Naive thymus-derived CD4-positive, alpha-beta T cell (primary cell): ENCODE measurements at regions of chr3 and their contacts with region 1.

Region 1: GRCh38 chr3:50292159-50293078 is at the start of gene IFRD2:
- DNase-seq: peak; percentile 81 to 97 (median 94)
- ATAC-seq: peak; percentile 99
- H3K4me3 ChIP-seq: peak within 1 kb of the TSS; percentile 62
- H3K4me3 Mint-ChIP-seq: peak within 1 kb of the TSS; percentile 81 to 99 (median 88)
- H3K27ac ChIP-seq: peak within 1 kb of the TSS; percentile 79
- H3K27ac Mint-ChIP-seq: peak within 1 kb of the TSS; percentile 85 to 97 (median 93)
- H3K4me1 ChIP-seq: peaks cover 13 to 16% of the 10 kb centered on the region in 2 donors
- H3K4me1 Mint-ChIP-seq: peaks cover 16 to 22% (median 19%) of the 10 kb centered on the region in 7 donors
- H3K27me3 ChIP-seq: no peaks in the 10 kb centered on the region
- H3K27me3 Mint-ChIP-seq: no peaks in the 10 kb centered on the region
- total RNA-seq, gene IFRD2: 53.7 to 85.1 (median 64.7) TPM

Region 2: DNA sequence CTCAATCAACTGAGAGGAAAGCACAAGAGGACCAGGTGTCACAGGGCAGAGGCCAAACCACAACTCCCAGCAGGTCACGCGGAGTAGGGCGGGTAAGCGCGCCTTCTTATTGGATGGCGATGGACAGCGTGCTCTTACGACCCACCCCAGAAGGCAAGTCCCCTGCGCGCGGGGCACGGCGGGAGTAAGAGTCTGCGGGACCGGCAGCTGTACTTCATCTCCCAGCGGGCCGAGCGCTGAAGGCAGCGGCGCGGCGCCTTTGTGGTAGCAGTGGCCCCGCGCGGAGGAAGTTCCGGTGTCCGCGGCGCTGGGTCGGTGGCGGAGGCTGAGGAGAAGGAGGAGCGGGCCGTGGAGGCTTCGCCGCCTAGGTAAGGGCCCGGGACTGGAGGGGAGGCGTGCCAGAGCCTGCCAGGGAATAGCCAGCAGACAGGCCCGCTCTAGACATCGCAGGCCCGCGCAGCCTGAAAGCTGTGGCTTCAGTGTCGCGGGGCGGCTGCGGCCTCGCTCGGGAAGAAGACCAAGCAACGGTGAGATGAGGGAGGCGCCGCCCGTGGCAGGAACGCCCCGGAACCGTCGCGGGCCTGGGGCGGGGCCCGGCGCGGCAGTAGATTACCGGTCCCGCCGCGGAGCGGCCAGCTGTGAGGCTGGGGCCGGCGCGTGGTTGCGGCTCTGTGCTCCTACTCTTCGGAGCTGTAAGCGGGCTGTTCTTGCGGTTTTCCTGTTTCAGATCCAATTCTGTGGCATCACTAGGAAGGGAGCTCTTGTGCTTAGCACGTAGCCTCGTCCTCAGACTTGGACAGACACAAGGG is 352.4 kb before region 1 on chr3 and contains the start of gene RBM6:
- CTCF ChIA-PET with region 1: no interaction called
- POLR2A ChIA-PET with region 1: no interaction called
- intact Hi-C with region 1: loop called in 1 of 2 experiments (anchors 1 kb)
- DNase-seq: peak; percentile 84 to 95 (median 93)
- ATAC-seq: peak; percentile 98
- H3K4me3 ChIP-seq: peak within 1 kb of the TSS; percentile 88
- H3K4me3 Mint-ChIP-seq: peak within 1 kb of the TSS; percentile 93 to 100 (median 98)
- H3K27ac ChIP-seq: peak within 1 kb of the TSS; percentile 97
- H3K27ac Mint-ChIP-seq: peak within 1 kb of the TSS; percentile 91 to 99 (median 97)
- H3K4me1 ChIP-seq: peaks cover 8 to 15% of the 10 kb centered on the region in 2 donors
- H3K4me1 Mint-ChIP-seq: peaks cover 7 to 41% (median 32%) of the 10 kb centered on the region in 7 donors
- H3K27me3 ChIP-seq: no peaks in the 10 kb centered on the region
- H3K27me3 Mint-ChIP-seq: peaks cover 0 to 1% (median 0%) of the 10 kb centered on the region in 5 donors
- total RNA-seq, gene RBM6: 103 to 208 (median 153) TPM

Region 3: DNA sequence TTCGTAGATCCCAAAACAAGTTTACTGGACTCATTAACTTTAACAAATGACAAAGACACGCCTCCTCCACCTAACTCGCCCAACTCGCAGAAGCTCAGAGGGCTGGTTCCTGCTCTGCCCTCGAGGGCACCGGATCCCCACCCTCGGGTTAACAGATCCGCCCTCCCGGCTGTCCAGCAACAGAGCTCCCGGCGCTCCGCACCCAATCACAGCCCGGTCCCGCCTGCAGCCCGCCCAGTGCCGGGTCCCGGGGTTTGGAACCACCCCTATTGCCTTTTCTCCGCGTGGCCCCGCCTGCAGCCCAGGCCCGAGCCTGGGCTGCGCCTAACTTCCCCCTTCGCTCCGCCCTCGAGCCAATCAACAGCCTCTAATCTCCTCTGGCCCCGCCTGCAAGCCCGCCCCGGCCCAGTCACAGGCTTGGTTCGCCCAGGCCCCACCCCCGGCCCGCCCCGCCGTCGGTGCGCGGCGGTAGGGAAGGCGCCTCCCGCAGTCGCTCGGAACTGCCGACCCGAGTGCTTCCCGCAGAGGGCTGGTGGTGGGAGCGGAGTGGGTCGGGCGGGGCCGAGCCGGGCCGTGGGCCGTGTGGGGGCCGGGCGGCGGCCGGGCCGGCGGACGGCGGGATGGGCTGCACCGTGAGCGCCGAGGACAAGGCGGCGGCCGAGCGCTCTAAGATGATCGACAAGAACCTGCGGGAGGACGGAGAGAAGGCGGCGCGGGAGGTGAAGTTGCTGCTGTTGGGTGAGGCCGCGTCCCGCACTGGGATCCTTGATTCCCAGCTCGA is 56.5 kb before region 1 on chr3 and contains the start of gene GNAI2:
- CTCF ChIA-PET with region 1: interaction called, 3 read pairs
- POLR2A ChIA-PET with region 1: interaction called, 17 read pairs
- intact Hi-C with region 1: loop called (anchors 1 kb)
- DNase-seq: peak; percentile 95 to 99 (median 99)
- ATAC-seq: peak; percentile 93
- H3K4me3 ChIP-seq: peak within 1 kb of the TSS; percentile 90
- H3K4me3 Mint-ChIP-seq: peak within 1 kb of the TSS; percentile 92 to 99 (median 98)
- H3K27ac ChIP-seq: peak within 1 kb of the TSS; percentile 84
- H3K27ac Mint-ChIP-seq: peak within 1 kb of the TSS; percentile 87 to 97 (median 95)
- H3K4me1 ChIP-seq: peaks cover 30 to 35% of the 10 kb centered on the region in 2 donors
- H3K4me1 Mint-ChIP-seq: peaks cover 12 to 41% (median 37%) of the 10 kb centered on the region in 7 donors
- H3K27me3 ChIP-seq: no peaks in the 10 kb centered on the region
- H3K27me3 Mint-ChIP-seq: no peaks in the 10 kb centered on the region
- total RNA-seq, gene GNAI2: 225 to 442 (median 282) TPM

Region 4: DNA sequence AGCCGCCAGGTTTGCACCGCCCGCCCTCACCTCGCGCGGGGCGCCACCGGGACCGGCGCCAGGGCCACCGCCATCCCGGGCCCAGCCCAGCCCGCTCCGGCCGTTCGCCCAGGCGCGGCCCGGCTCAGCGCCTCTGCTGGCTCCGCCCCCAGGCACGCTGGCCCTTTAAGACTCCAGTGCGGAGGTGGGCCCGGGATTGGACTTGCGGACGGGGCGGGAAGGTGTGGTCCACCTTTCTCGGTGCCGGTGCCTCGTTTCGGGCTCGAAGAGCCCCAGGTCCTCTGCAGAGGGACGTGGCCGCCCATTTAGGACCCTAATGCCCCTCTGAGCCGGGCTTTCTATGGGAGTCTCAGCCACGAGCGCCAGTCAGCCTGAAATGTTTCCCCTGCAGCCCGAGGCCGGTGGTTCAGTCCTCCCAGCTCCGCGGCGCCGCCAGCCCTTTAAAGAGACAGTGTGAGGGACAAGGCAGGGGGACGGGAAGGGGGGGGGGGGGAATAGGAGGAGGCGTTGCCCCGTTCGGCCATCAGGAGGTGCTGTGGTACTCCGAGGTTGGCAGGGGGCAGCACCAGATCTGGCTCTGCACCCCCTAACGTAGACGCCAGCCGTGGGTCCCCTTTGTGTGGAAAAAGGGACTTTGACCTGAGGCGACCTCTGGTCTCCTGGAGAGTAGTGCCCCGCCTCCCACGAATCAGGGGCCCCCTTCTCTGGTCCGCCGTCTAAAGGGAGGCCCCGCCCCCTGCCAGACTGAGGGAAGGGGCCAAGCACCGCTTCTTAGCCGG is 29.1 kb after region 1 on chr3:
- CTCF ChIA-PET with region 1: interaction called, 3 read pairs
- POLR2A ChIA-PET with region 1: interaction called, 31 read pairs
- intact Hi-C with region 1: loop called in 1 of 2 experiments (anchors 1 kb)
- DNase-seq: peak; percentile 67 to 90 (median 83)
- ATAC-seq: peak; percentile 83
- H3K4me3 ChIP-seq: peak overlapping the region; percentile 97
- H3K4me3 Mint-ChIP-seq: peak overlapping the region; percentile 74 to 90 (median 82)
- H3K27ac ChIP-seq: peak overlapping the region; percentile 95
- H3K27ac Mint-ChIP-seq: peak overlapping the region; percentile 40 to 96 (median 93)
- H3K4me1 ChIP-seq: peaks cover 12 to 21% of the 10 kb centered on the region in 2 donors
- H3K4me1 Mint-ChIP-seq: peaks cover 21 to 45% (median 36%) of the 10 kb centered on the region in 7 donors
- H3K27me3 ChIP-seq: no peaks in the 10 kb centered on the region
- H3K27me3 Mint-ChIP-seq: no peaks in the 10 kb centered on the region

Region 5: DNA sequence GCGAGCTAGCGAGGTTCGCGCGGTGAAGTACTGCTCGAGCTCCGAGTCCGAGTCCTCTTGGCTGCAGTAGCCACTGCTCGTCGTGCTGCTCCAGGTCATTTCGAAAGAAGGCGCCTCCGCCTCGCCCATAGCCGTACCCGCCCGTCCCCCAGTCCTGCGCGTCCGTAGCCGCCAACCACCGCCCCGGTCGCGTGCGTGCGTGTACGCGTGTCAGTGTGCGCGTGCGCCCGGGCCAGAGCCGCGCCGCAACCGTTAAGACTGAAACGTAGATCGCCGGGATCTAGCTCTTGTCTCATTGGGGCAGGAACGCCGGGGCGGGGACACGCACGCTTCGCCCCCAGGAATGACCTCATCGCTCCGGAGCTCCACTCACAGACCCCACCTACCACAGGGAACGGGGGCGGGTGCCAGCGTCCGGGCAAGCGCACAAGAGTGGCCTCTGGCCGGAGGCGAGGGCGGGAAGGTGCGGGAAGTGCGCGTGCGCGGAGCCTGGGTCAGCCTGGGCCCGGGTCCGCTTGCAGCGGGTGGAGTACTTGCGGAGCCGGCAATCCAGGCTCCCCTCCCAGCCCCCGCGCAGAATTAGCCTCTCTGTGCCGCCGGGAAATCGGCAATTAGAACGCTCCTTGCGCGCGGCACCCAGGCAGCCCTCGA is 44.9 kb after region 1 on chr3:
- CTCF ChIA-PET with region 1: interaction called, 4 read pairs
- POLR2A ChIA-PET with region 1: interaction called, 41 read pairs
- intact Hi-C with region 1: loop called in 1 of 2 experiments (anchors 1 kb)
- DNase-seq: peak; percentile 83 to 98 (median 91)
- ATAC-seq: peak; percentile 88
- H3K4me3 ChIP-seq: peak overlapping the region; percentile 83
- H3K4me3 Mint-ChIP-seq: peak overlapping the region; percentile 92 to 97 (median 95)
- H3K27ac ChIP-seq: peak overlapping the region; percentile 92
- H3K27ac Mint-ChIP-seq: peak overlapping the region; percentile 92 to 97 (median 96)
- H3K4me1 ChIP-seq: peaks cover 43 to 58% of the 10 kb centered on the region in 2 donors
- H3K4me1 Mint-ChIP-seq: peaks cover 35 to 73% (median 68%) of the 10 kb centered on the region in 7 donors
- H3K27me3 ChIP-seq: no peaks in the 10 kb centered on the region
- H3K27me3 Mint-ChIP-seq: peaks cover 0 to 3% (median 0%) of the 10 kb centered on the region in 5 donors

Region 6: GRCh38 chr3:50365080-50365841 is 72.8 kb after region 1 on chr3:
- CTCF ChIA-PET with region 1: no interaction called
- POLR2A ChIA-PET with region 1: interaction called, 3 read pairs
- intact Hi-C with region 1: loop called in 1 of 2 experiments (anchors 1 kb)
- DNase-seq: peak; percentile 82 to 96 (median 94)
- ATAC-seq: peak; percentile 97
- H3K4me3 ChIP-seq: peak overlapping the region; percentile 99
- H3K4me3 Mint-ChIP-seq: peak overlapping the region; percentile 82 to 93 (median 90)
- H3K27ac ChIP-seq: peak overlapping the region; percentile 95
- H3K27ac Mint-ChIP-seq: peak overlapping the region; percentile 87 to 97 (median 94)
- H3K4me1 ChIP-seq: peaks cover 13 to 18% of the 10 kb centered on the region in 2 donors
- H3K4me1 Mint-ChIP-seq: peaks cover 8 to 36% (median 20%) of the 10 kb centered on the region in 7 donors
- H3K27me3 ChIP-seq: no peaks in the 10 kb centered on the region
- H3K27me3 Mint-ChIP-seq: no peaks in the 10 kb centered on the region

Region 7: DNA sequence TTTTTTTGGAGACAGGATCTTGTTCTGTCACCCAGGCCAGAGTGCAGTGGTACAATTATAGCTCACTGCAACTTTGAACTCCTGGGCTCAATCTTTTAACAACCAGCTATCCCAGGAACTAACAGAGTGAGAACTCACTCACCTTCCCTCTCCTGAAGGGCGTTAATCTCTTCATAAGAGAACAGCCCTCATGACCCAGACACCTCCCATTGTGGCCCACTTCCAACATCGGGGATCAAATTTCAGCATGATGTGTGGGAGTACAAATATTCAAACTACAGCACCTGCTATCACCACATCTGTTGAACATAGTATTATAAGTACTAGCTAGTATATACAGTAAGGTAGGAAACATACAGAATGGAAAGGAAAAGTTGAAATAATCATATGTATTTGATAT is 514.8 kb after region 1 on chr3:
- CTCF ChIA-PET with region 1: no interaction called
- POLR2A ChIA-PET with region 1: no interaction called
- intact Hi-C with region 1: no loop called
- DNase-seq: no peak
- ATAC-seq: no peak
- H3K4me3 ChIP-seq: no peak overlapping the region
- H3K4me3 Mint-ChIP-seq: no peak overlapping the region
- H3K27ac ChIP-seq: no peak overlapping the region
- H3K27ac Mint-ChIP-seq: no peak overlapping the region
- H3K4me1 ChIP-seq: no peaks in the 10 kb centered on the region
- H3K4me1 Mint-ChIP-seq: peaks cover 0 to 4% (median 0%) of the 10 kb centered on the region in 7 donors
- H3K27me3 ChIP-seq: no peaks in the 10 kb centered on the region
- H3K27me3 Mint-ChIP-seq: no peaks in the 10 kb centered on the region